H1 (cell line): ENCODE measurements at regions of chr3 and their contacts with region 1.

Region 1: GRCh38 chr3:42891042-42891441 is 14.9 kb upstream of the ZNF662 start:
- DNase-seq: peak in 1 of 2 experiments; percentile 33
- H3K4me3 ChIP-seq: peak overlapping the region in 1 of 4 experiments; percentile 1; a peak in 1 of 8 replicates
- H3K27ac ChIP-seq: peak overlapping the region; percentile 67
- H3K4me1 ChIP-seq: peaks cover 0 to 15% (median 5%) of the 10 kb centered on the region in 4 experiments; a peak in 5 of 7 replicates
- H3K27me3 ChIP-seq: no peaks in the 10 kb centered on the region
- CTCF ChIP-seq: no peak
- EP300 ChIP-seq: no peak
- POLR2A ChIP-seq: no peak
- RAD21 ChIP-seq: no peak

Region 2: GRCh38 chr3:42118762-42119361 is 772.2 kb before region 1 on chr3:
- CTCF ChIA-PET with region 1: no interaction called
- POLR2A ChIA-PET with region 1: no interaction called
- DNase-seq: peak in 1 of 2 experiments; percentile 19
- H3K4me3 ChIP-seq: no peak overlapping the region
- H3K27ac ChIP-seq: no peak overlapping the region
- H3K4me1 ChIP-seq: peaks cover 2 to 5% (median 4%) of the 10 kb centered on the region in 4 experiments; a peak in 6 of 7 replicates
- H3K27me3 ChIP-seq: no peaks in the 10 kb centered on the region
- CTCF ChIP-seq: peak; percentile 74 to 83 (median 78)
- EP300 ChIP-seq: no peak
- POLR2A ChIP-seq: no peak
- RAD21 ChIP-seq: peak; percentile 82 to 86

Region 3: DNA sequence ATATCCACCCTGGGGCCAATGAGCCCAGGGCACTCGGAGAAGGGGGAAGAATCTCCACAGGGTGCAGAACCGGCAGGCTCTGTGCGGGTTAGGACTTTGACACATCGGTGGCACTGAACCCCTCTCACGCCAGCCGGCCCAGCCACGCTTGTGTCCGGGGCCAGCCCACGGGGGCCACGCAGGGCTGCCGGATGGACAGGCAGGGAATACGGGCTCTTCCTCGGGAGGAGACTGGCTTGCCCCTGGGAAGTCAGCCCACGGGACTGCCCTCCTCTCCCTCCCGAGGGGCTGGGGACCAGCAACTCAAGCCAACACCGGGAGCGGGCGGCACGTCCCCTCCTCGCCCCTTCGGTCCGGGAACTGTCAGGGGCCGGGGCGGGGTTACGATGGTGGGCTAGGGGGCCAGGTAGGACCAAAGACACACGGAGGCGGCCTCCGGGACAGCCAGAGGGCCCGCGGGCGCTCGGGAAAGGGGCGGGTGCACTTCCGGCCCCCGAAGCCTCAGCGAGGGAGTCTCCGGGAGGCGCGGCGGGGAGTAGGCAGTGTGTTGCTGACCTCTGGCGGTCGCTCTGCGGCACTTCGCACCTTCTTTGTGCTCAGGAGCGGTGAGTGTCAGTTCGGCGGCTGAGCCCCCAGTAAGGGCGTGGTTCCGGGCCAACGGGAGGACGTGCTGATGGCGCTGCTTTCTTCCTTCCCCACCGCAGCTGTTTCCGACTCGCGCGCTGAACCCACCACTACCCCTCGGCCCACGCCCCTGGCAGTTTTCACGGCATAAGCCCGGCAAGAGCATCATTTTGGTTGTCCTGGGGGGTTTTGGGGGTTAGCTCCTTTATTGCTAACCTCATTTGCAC is 10.2 kb before region 1 on chr3:
- CTCF ChIA-PET with region 1: interaction called, 14 read pairs
- POLR2A ChIA-PET with region 1: interaction called, 5 read pairs
- DNase-seq: peak; percentile 74 to 86
- H3K4me3 ChIP-seq: peak overlapping the region; percentile 16 to 63 (median 44); a peak in 7 of 8 replicates
- H3K27ac ChIP-seq: no peak overlapping the region
- H3K4me1 ChIP-seq: peaks cover 3 to 12% (median 7%) of the 10 kb centered on the region in 4 experiments; a peak in 4 of 7 replicates
- H3K27me3 ChIP-seq: no peaks in the 10 kb centered on the region
- CTCF ChIP-seq: peak; percentile 86 to 91 (median 87)
- EP300 ChIP-seq: 0 out of 3 replicates have a peak, but pooled peaks of 1 of the 2 experiments have one; percentile 11
- POLR2A ChIP-seq: peak in 1 of 2 experiments; percentile 42; a peak in 1 of 3 replicates
- RAD21 ChIP-seq: peak; percentile 86 to 88